Sciatic nerve (tissue), 2 donors: ENCODE measurements at regions of chr1 and their contacts with region 1.

Region 1: GRCh38 chr1:32115496-32115895 is 7.6 kb downstream of the KPNA6 start:
- DNase-seq: no peak
- ATAC-seq: peak; percentile 26

Region 2: GRCh38 chr1:32063261-32063681 is 52.2 kb before region 1 on chr1:
- intact Hi-C with region 1: no loop called
- DNase-seq: no peak
- ATAC-seq: peak; percentile 69

Region 3: DNA sequence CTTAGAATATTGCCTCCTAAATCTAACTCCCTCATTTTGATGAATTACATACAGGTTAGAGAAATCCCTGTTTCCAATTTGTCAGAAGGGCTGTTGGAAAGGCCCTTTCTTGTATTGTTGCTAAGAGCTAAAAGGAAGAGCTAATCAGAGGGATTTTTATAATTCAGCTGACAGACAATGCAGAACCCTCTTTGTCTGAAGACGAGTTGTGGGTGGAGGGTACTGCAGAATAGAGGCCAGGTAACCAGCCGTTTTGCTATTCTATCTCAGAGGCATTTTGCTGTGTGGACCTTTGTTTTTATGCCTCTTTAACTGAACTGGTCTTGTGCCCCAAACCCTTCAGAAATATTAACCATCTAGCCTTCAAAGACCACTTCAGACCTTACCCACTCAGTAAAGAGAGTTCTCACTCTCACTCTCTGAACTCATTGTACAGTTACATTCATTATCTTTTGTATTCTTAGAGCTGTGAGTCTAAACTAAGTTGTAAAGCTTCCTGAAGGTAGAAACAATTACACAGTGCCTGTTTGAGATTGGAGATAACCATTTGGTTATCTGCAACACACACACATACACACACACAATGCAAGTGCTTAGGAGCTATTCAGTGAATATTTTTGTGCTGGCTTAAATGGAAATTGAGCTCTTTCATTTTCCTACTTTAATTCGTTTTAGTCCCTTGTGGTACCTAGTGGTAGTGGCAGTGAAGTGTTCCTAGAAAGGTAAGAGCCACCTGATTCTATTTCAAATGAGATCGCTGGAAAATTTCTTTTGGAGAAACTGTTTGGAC is 12.1 kb after region 1 on chr1:
- intact Hi-C with region 1: loop called (anchors 2 kb)
- DNase-seq: no peak
- ATAC-seq: no peak